Activated CD4-positive, alpha-beta T cell treated with anti-CD3 and anti-CD28 coated beads for 36 hours (primary cell): ENCODE measurements at regions of chr19 and their contacts with region 1.

Region 1: GRCh38 chr19:58362272-58362994 is at the start of gene ZNF497:
- DNase-seq: peak; percentile 99
- ATAC-seq: peak; percentile 94
- H3K4me3 Mint-ChIP-seq: peak within 1 kb of the TSS; percentile 86
- H3K27ac Mint-ChIP-seq: peak within 1 kb of the TSS; percentile 93
- H3K4me1 Mint-ChIP-seq: peaks cover 7% of the 10 kb centered on the region
- H3K27me3 Mint-ChIP-seq: no peaks in the 10 kb centered on the region
- total RNA-seq, gene ZNF497: 1.1 to 1.5 TPM

Region 2: GRCh38 chr19:58261968-58262921 is 100.2 kb before region 1 on chr19:
- CTCF ChIA-PET with region 1: no interaction called
- POLR2A ChIA-PET with region 1: no interaction called
- intact Hi-C with region 1: no loop called
- DNase-seq: no peak
- ATAC-seq: no peak
- H3K4me3 Mint-ChIP-seq: no peak overlapping the region
- H3K27ac Mint-ChIP-seq: no peak overlapping the region
- H3K4me1 Mint-ChIP-seq: no peaks in the 10 kb centered on the region
- H3K27me3 Mint-ChIP-seq: no peaks in the 10 kb centered on the region

Region 3: GRCh38 chr19:58346961-58347931 is 15.2 kb before region 1 on chr19:
- CTCF ChIA-PET with region 1: interaction called, 15 read pairs
- POLR2A ChIA-PET with region 1: interaction called, 3 read pairs
- intact Hi-C with region 1: loop called (anchors 1 to 2 kb)
- DNase-seq: peak; percentile 87
- ATAC-seq: peak; percentile 97
- H3K4me3 Mint-ChIP-seq: peak overlapping the region; percentile 87
- H3K27ac Mint-ChIP-seq: peak overlapping the region; percentile 70
- H3K4me1 Mint-ChIP-seq: peaks cover 16% of the 10 kb centered on the region
- H3K27me3 Mint-ChIP-seq: peaks cover 10% of the 10 kb centered on the region

Region 4: GRCh38 chr19:58395220-58396029 is 33.0 kb after region 1 on chr19 and contains the start of gene RNF225:
- CTCF ChIA-PET with region 1: no interaction called
- POLR2A ChIA-PET with region 1: no interaction called
- intact Hi-C with region 1: no loop called
- DNase-seq: peak; percentile 31
- ATAC-seq: peak; percentile 21
- H3K4me3 Mint-ChIP-seq: no peak within 1 kb of the TSS
- H3K27ac Mint-ChIP-seq: no peak within 1 kb of the TSS
- H3K4me1 Mint-ChIP-seq: peaks cover 22% of the 10 kb centered on the region
- H3K27me3 Mint-ChIP-seq: peaks cover 2% of the 10 kb centered on the region
- total RNA-seq, gene RNF225: 0.25 to 0.56 TPM

Region 5: DNA sequence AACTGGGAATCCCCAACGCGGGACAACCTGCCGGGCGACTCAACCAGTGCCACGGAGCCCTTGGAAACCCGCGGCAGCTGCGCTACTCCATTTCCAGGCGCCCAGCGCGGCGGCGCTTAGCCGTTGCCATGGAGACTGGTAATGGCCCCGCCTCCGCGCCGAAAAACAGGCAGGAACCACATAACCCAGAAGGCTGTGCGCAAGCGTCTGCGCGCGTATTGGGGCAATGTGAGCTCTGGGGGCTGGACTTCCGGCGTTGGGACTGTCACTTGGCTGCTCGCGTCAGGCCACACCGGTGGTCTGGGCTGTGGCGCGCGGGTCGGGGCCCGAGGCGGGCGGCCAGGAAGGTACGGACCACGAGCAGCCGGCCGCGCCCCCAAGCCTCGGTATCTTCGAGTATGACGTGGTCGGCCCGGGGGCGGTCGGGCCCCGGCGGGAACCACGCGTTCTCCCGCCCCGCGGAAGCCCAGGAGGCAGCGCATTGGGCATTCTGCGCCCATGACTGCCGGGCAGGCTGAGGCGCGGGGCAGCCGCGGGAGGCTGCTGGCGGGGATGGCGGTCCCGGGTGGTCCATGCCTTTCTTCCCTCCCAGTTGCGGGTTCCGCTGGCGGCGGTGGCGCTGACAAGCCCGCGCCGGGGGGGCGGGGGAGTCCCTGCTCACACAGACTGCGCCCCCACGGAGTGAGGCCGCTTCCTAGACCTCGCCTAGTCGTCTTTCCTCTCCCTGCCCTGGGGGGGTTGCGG is 89.1 kb after region 1 on chr19 and contains the start of gene ZNF324B:
- CTCF ChIA-PET with region 1: no interaction called
- POLR2A ChIA-PET with region 1: no interaction called
- intact Hi-C with region 1: loop called in 1 of 2 experiments (anchors 1 kb)
- DNase-seq: peak; percentile 98
- ATAC-seq: peak; percentile 99
- H3K4me3 Mint-ChIP-seq: peak within 1 kb of the TSS; percentile 77
- H3K27ac Mint-ChIP-seq: peak within 1 kb of the TSS; percentile 55
- H3K4me1 Mint-ChIP-seq: peaks cover 25% of the 10 kb centered on the region
- H3K27me3 Mint-ChIP-seq: peaks cover 15% of the 10 kb centered on the region
- total RNA-seq, gene ZNF324B: 5.8 to 7.5 TPM